Panc1 (cell line): ENCODE measurements at regions of chr3 and their contacts with region 1.

Region 1: GRCh38 chr3:15527031-15527459 is 5.5 kb upstream of the COLQ start:
- DNase-seq: no peak
- ATAC-seq: no peak
- H3K4me3 ChIP-seq: no peak overlapping the region
- H3K27ac ChIP-seq: no peak overlapping the region
- H3K4me1 ChIP-seq: no peaks in the 10 kb centered on the region
- H3K27me3 ChIP-seq: no peaks in the 10 kb centered on the region
- CTCF ChIP-seq: no peak

Region 2: DNA sequence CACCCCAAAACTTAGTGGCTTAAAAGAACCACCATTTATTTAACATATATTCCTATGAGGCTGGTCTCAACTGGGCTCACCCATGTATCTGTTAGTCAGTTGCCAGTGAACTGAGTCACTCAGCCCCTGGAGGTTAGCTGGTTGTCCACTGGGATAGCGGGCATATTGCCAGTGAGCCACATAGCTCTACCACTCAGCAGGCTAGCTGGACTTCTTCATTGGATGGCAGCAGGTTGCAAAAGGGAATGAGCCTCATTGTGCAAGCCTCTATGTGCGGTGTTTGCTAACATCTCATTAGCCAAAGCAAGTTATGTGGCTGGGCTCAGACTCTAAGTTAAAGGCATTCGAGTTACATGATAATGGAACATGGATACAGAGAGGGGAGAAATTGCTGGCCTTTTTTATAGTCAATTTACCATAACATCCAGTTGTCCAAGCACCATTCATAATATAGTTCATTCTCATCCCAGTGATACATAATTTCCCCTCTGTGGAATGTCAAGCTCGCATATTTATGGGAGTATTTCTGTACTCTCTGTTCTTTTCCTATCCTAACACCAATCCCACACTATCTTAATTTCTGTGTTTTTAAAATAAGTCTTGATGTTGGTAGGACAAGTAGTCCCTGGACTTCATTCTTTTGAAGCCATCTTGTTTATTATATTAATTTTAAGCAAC is 83.2 kb after region 1 on chr3:
- CTCF ChIA-PET with region 1: no interaction called
- POLR2A ChIA-PET with region 1: interaction called, 13 read pairs
- in situ Hi-C with region 1: no loop called
- intact Hi-C with region 1: no loop called
- DNase-seq: no peak
- ATAC-seq: peak; percentile 80
- H3K4me3 ChIP-seq: no peak overlapping the region
- H3K27ac ChIP-seq: peak overlapping the region; percentile 34; the same call in 1 of the 2 replicates
- H3K4me1 ChIP-seq: peaks cover 45% of the 10 kb centered on the region
- H3K27me3 ChIP-seq: no peaks in the 10 kb centered on the region
- CTCF ChIP-seq: no peak